Esophagus muscularis mucosa (tissue), 4 donors: ENCODE measurements at regions of chr5 and their contacts with region 1.

Region 1: GRCh38 chr5:146137967-146138403 is 32.6 kb upstream of the PLAC8L1 start:
- DNase-seq: no peak
- H3K4me3 ChIP-seq: no peak overlapping the region
- H3K27ac ChIP-seq: peak overlapping the region in 2 of 4 donors; percentile 8 to 11
- H3K4me1 ChIP-seq: peaks cover 0 to 11% (median 3%) of the 10 kb centered on the region in 4 donors
- H3K27me3 ChIP-seq: no peaks in the 10 kb centered on the region
- CTCF ChIP-seq: no peak
- EP300 ChIP-seq: no peak
- POLR2A ChIP-seq: no peak

Region 2: GRCh38 chr5:146173597-146173996 is 35.6 kb after region 1 on chr5:
- intact Hi-C with region 1: no loop called
- DNase-seq: no peak
- H3K4me3 ChIP-seq: no peak overlapping the region
- H3K27ac ChIP-seq: no peak overlapping the region
- H3K4me1 ChIP-seq: no peaks in the 10 kb centered on the region
- H3K27me3 ChIP-seq: no peaks in the 10 kb centered on the region
- CTCF ChIP-seq: no peak
- EP300 ChIP-seq: no peak
- POLR2A ChIP-seq: no peak

Region 3: GRCh38 chr5:146273109-146273508 is 135.1 kb after region 1 on chr5:
- intact Hi-C with region 1: loop called (anchors 10 kb)
- DNase-seq: no peak
- H3K4me3 ChIP-seq: no peak overlapping the region
- H3K27ac ChIP-seq: no peak overlapping the region
- H3K4me1 ChIP-seq: no peaks in the 10 kb centered on the region
- H3K27me3 ChIP-seq: no peaks in the 10 kb centered on the region
- CTCF ChIP-seq: no peak
- EP300 ChIP-seq: no peak
- POLR2A ChIP-seq: no peak